Activated naive CD4-positive, alpha-beta T cell treated with anti-CD3 and anti-CD28 coated beads for 36 hours (primary cell): ENCODE measurements at regions of chr12 and their contacts with region 1.

Region 1: DNA sequence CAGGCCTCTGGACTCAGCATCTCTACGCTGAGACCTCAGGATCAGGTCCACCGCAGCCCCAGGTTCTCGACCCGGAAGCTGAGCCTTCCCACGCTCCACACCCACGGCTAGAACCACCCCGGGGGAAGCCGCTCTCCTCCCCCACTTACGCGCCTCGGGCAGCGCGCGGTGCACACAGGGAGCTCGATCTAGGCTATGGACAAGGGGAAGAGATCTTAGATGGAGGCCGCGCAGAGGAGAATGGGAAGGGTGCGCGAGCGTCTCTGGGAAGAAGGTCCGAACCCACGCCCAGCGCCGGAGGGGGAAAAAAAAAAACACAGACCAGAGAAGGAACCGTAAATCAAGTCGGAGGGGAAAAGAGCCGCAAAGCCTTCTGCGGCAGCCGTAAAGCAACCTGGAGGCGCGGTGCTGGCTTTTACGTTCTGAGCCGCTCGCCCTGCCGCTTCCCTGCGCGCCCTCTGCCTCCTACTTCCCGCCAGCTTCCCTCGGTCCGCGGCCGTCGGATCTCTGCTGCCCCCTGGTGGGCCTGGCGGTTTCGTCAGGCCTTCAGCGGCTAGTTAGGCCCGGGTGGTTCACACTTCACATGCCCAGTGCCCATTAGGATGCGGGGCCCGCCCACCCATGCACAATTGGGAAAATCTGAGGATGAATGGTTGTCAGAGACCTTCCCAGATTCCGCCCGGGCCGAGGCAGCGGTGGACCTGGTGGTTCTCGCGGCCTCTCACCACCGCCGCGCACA is at the start of gene RAD52:
- DNase-seq: peak; percentile 98
- H3K4me3 Mint-ChIP-seq: peak within 1 kb of the TSS; percentile 93
- H3K27ac Mint-ChIP-seq: peak within 1 kb of the TSS; percentile 96
- H3K4me1 Mint-ChIP-seq: peaks cover 34% of the 10 kb centered on the region
- H3K27me3 Mint-ChIP-seq: no peaks in the 10 kb centered on the region
- total RNA-seq, gene RAD52: 15.6 to 17.9 TPM

Region 2: GRCh38 chr12:575948-576612 is 373.5 kb before region 1 on chr12:
- CTCF ChIA-PET with region 1: interaction called, 12 read pairs
- intact Hi-C with region 1: loop called (anchors 1 kb)
- DNase-seq: peak; percentile 80
- H3K4me3 Mint-ChIP-seq: peak overlapping the region; percentile 14
- H3K27ac Mint-ChIP-seq: no peak overlapping the region
- H3K4me1 Mint-ChIP-seq: peaks cover 29% of the 10 kb centered on the region
- H3K27me3 Mint-ChIP-seq: no peaks in the 10 kb centered on the region

Region 3: GRCh38 chr12:685388-685787 is 264.2 kb before region 1 on chr12:
- CTCF ChIA-PET with region 1: no interaction called
- intact Hi-C with region 1: loop called (anchors 1 kb)
- DNase-seq: peak; percentile 94
- H3K4me3 Mint-ChIP-seq: peak overlapping the region; percentile 36
- H3K27ac Mint-ChIP-seq: peak overlapping the region; percentile 82
- H3K4me1 Mint-ChIP-seq: peaks cover 36% of the 10 kb centered on the region
- H3K27me3 Mint-ChIP-seq: no peaks in the 10 kb centered on the region

Region 4: DNA sequence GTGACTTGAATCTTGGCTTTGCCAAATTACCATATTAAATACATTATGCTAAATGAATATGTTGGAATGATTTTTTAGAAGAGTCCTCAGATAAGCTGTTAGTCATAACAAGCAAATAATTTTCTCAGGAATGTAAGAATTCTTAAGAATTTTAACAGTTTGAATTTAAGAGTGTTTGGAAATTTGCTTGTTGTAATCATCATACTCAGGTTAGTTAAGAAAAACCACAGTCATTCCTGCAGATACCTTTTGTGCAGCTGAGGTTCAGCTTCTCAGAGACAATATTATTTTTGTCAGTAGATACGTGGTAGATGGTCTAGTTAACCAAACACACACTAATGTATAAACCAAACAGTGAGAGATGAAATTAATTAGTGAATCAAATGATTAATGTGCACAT is 188.4 kb before region 1 on chr12:
- CTCF ChIA-PET with region 1: no interaction called
- intact Hi-C with region 1: no loop called
- DNase-seq: no peak
- H3K4me3 Mint-ChIP-seq: no peak overlapping the region
- H3K27ac Mint-ChIP-seq: no peak overlapping the region
- H3K4me1 Mint-ChIP-seq: peaks cover 66% of the 10 kb centered on the region
- H3K27me3 Mint-ChIP-seq: no peaks in the 10 kb centered on the region

Region 5: GRCh38 chr12:848173-848865 is 101.3 kb before region 1 on chr12:
- CTCF ChIA-PET with region 1: no interaction called
- intact Hi-C with region 1: loop called (anchors 1 kb)
- DNase-seq: no peak
- H3K4me3 Mint-ChIP-seq: no peak overlapping the region
- H3K27ac Mint-ChIP-seq: peak overlapping the region; percentile 77
- H3K4me1 Mint-ChIP-seq: peaks cover 50% of the 10 kb centered on the region
- H3K27me3 Mint-ChIP-seq: no peaks in the 10 kb centered on the region

Region 6: DNA sequence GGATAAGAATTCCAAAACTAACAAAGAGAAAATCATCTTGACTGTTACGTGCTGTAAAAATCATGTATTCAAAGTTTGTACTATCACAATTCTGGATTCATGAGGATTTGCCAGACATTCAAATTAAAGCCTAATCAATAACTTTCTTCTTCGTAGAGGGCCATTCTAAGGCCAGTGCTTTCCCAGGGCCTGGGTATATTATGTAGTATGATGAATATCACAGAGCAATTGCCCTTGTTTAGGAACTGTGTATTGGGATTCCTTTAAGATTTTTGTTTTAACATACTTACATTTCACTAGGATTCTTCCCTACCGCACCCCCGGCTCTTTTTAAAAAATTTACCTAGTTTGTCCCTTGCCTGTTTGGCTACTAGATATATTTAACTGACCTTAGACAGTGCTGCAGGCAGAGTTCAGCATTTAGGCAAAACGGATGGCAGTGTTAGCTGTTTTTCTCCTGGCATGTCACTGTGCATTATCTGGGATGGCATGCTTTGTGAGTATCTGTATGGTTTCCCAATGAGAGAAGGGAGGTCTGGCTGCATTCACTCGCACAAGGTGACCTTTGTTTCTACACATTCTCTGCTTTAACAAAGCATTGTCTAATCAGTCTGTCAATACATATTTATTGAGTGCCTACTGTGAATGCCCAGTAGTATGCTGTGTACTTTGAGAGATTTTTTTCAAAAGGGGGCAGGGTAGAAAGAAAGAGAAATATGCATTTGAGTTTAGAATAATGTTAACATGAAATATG is 104.7 kb after region 1 on chr12:
- CTCF ChIA-PET with region 1: no interaction called
- intact Hi-C with region 1: no loop called
- DNase-seq: no peak
- H3K4me3 Mint-ChIP-seq: no peak overlapping the region
- H3K27ac Mint-ChIP-seq: no peak overlapping the region
- H3K4me1 Mint-ChIP-seq: peaks cover 1% of the 10 kb centered on the region
- H3K27me3 Mint-ChIP-seq: no peaks in the 10 kb centered on the region

Region 7: GRCh38 chr12:1093166-1093751 is 143.6 kb after region 1 on chr12:
- CTCF ChIA-PET with region 1: interaction called, 8 read pairs
- intact Hi-C with region 1: loop called (anchors 5 kb)
- DNase-seq: peak; percentile 51
- H3K4me3 Mint-ChIP-seq: no peak overlapping the region
- H3K27ac Mint-ChIP-seq: no peak overlapping the region
- H3K4me1 Mint-ChIP-seq: peaks cover 20% of the 10 kb centered on the region
- H3K27me3 Mint-ChIP-seq: no peaks in the 10 kb centered on the region

Region 8: DNA sequence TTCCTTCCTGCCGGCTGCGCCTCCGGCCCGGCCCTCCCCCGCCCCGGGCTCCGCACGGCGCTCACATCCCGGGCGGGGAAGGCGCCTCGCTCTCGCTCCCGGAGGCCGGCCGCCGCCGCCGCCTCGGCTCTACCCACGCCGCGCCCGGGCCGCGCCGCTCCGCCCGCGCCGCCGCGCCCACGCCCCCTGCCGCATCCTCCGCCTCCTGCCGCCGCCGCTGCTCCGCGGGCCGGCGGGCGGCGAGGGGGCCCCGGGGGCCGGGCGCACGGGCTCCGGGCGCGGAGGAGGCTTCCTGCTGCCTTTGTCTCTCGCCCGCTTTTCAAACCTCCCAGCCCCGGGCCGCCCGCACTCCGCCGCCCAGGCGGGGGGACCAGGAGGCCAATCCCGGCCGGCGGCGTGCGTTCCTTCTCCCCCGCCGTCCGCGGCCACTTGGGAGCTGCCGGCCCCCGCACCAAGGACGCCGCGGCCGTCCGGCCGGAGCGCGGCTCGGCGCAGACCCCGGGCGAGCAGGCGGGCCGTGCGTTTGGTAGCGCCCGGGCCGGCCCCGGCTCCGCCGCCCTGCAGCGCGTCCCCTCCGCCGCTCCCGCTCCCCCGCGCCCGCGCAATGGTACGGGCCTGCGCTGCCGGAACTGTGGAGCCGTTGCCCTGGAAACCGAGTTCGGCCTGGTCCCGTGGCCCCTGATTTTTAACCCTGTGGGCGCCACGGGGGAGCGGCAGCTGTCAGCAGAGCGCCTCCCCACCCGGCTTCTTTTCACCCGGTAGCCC is 644.8 kb after region 1 on chr12 and contains the start of gene FBXL14:
- CTCF ChIA-PET with region 1: no interaction called
- intact Hi-C with region 1: loop called (anchors 1 kb)
- DNase-seq: peak; percentile 88
- H3K4me3 Mint-ChIP-seq: peak within 1 kb of the TSS; percentile 94
- H3K27ac Mint-ChIP-seq: peak within 1 kb of the TSS; percentile 88
- H3K4me1 Mint-ChIP-seq: peaks cover 39% of the 10 kb centered on the region
- H3K27me3 Mint-ChIP-seq: no peaks in the 10 kb centered on the region
- total RNA-seq, gene FBXL14: 11.4 to 11.9 TPM